GM18951 (cell line): ENCODE measurements at regions of chr22 and their contacts with region 1.

Region 1: DNA sequence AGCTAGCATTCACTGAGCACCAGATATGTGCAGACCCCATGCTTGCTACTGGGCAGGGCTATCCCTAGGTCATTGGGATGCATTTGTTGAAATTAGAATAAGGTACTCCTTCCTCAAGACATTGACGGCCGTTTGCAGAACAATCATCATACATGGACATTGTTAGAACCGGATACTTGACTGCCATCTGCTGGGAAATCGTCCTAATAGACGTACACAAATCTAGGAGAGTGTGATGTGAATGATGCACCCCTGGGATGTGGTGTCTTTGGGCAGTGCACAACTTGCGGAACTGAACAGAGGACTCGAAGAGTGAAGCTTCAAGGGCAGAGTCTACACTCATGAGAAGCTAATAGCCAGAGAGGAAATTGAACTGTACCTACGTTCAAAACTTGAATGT is 35.9 kb downstream of the MYO18B start:
- POLR2A ChIP-seq: no peak

Region 2: DNA sequence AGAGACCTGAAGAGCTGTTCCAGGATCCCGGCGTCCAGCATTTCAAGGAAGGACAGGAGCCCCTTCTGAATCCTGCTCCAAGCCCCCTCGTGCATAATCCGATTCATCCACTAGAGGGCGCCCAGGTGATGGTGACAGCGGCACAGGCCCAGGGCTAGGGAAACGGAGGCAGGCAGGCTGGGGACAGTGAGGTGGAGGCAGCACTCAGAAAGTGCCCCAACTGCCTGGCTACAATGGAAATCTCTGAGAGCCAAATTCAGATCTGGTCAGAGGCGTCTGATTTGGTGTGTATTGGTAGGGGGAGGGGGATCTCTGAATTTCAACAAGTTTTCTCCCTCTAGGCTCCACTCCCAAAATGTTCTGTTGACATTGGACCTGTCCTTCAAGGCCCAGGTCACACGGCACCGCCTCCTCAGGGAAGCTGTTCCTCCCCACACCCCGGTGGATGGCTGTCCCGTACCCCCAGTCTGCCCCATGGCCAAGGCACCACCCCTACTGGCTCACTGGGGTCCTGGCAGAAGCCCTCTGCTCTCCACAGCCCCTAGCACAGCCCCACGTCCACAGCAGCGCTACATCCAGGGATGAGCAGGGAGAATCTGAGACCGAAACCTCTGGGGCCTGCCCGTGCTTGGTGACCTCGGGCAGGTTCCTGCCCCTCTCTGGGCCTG is 415.5 kb before region 1 on chr22:
- in situ Hi-C with region 1: loop called (anchors 10 kb)
- POLR2A ChIP-seq: no peak